SK-N-SH (cell line): ENCODE measurements at regions of chr14 and their contacts with region 1.

Region 1: GRCh38 chr14:56491299-56492285 is 88.0 kb upstream of the TMEM260 start:
- DNase-seq: peak; percentile 39
- H3K4me3 ChIP-seq: no peak overlapping the region; a peak in 1 of 4 replicates
- H3K27ac ChIP-seq: no peak overlapping the region
- H3K4me1 ChIP-seq: peaks cover 2 to 4% of the 10 kb centered on the region in 2 experiments; a peak in 2 of 4 replicates
- H3K27me3 ChIP-seq: peaks cover 12% of the 10 kb centered on the region; the same call in 1 of the 2 replicates
- CTCF ChIP-seq: peak; percentile 76
- EP300 ChIP-seq: no peak
- RAD21 ChIP-seq: peak; percentile 69

Region 2: DNA sequence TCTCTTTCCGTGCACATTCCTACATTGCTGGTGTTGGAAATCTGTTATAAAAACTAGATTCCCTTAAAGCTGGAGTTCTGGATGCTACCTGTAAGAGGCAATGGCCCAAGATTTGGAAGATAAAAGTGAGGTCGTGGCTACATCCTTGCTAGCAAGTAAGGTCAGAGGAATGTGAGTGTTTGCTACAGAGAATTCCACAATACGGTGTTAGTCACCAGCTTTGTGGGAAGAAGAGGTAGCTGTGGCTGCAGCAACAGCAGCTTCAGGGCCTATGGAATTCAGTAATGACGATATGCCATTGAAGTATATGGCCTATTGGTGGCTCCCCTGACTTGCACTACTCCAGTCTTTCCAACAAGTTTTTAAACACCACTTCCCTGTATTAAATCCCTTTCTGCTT is 139.7 kb before region 1 on chr14:
- CTCF ChIA-PET with region 1: no interaction called
- POLR2A ChIA-PET with region 1: no interaction called
- DNase-seq: no peak
- H3K4me3 ChIP-seq: no peak overlapping the region
- H3K27ac ChIP-seq: no peak overlapping the region
- H3K4me1 ChIP-seq: no peaks in the 10 kb centered on the region
- H3K27me3 ChIP-seq: peaks cover 7% of the 10 kb centered on the region; the same call in 1 of the 2 replicates
- CTCF ChIP-seq: no peak
- EP300 ChIP-seq: no peak
- RAD21 ChIP-seq: no peak

Region 3: GRCh38 chr14:56474419-56475022 is 17.1 kb before region 1 on chr14:
- CTCF ChIA-PET with region 1: interaction called, 15 read pairs
- POLR2A ChIA-PET with region 1: no interaction called
- DNase-seq: peak; percentile 43
- H3K4me3 ChIP-seq: no peak overlapping the region; a peak in 1 of 4 replicates
- H3K27ac ChIP-seq: no peak overlapping the region
- H3K4me1 ChIP-seq: no peaks in the 10 kb centered on the region
- H3K27me3 ChIP-seq: no peaks in the 10 kb centered on the region; the same call in 1 of the 2 replicates
- CTCF ChIP-seq: peak; percentile 85
- EP300 ChIP-seq: no peak
- RAD21 ChIP-seq: peak; percentile 87

Region 4: GRCh38 chr14:56514663-56515371 is 23.2 kb after region 1 on chr14:
- CTCF ChIA-PET with region 1: interaction called, 23 read pairs
- POLR2A ChIA-PET with region 1: no interaction called
- DNase-seq: no peak
- H3K4me3 ChIP-seq: no peak overlapping the region
- H3K27ac ChIP-seq: no peak overlapping the region
- H3K4me1 ChIP-seq: no peaks in the 10 kb centered on the region
- H3K27me3 ChIP-seq: peaks cover 21% of the 10 kb centered on the region; the same call in 1 of the 2 replicates
- CTCF ChIP-seq: no peak
- EP300 ChIP-seq: no peak
- RAD21 ChIP-seq: no peak

Region 5: GRCh38 chr14:57182760-57183503 is 691.3 kb after region 1 on chr14:
- CTCF ChIA-PET with region 1: interaction called, 74 read pairs
- POLR2A ChIA-PET with region 1: no interaction called
- DNase-seq: peak; percentile 39
- H3K4me3 ChIP-seq: peak overlapping the region in 1 of 2 experiments; percentile 43; a peak in 1 of 4 replicates
- H3K27ac ChIP-seq: no peak overlapping the region
- H3K4me1 ChIP-seq: no peaks in the 10 kb centered on the region
- H3K27me3 ChIP-seq: peaks cover 34% of the 10 kb centered on the region; the same call in 1 of the 2 replicates
- CTCF ChIP-seq: peak; percentile 48
- EP300 ChIP-seq: no peak
- RAD21 ChIP-seq: peak; percentile 84

Region 6: DNA sequence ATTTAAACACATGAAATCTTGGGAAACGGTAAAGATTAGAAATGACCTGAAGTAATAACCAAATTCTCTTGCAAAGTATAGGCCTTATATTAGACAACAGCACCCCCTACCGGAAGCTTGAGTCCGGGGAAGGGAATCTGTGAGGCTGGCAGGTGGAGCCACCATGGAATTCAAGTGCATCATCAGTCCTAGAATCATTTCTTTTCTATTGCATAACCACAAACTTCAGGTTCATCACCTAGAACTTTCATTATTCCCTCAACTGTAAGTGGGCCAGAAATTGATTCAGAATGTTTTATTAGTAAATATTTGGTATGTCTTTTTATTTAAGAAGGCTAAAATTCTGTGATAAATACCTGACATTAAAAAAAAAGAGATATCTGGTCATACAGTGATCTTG is 825.7 kb after region 1 on chr14:
- CTCF ChIA-PET with region 1: interaction called, 31 read pairs
- POLR2A ChIA-PET with region 1: no interaction called
- DNase-seq: peak; percentile 65
- H3K4me3 ChIP-seq: no peak overlapping the region
- H3K27ac ChIP-seq: no peak overlapping the region
- H3K4me1 ChIP-seq: no peaks in the 10 kb centered on the region
- H3K27me3 ChIP-seq: peaks cover 23% of the 10 kb centered on the region; the same call in 1 of the 2 replicates
- CTCF ChIP-seq: peak; percentile 91
- EP300 ChIP-seq: no peak
- RAD21 ChIP-seq: peak; percentile 88